Gastrocnemius medialis (tissue), 4 donors: ENCODE measurements at regions of chr22 and their contacts with region 1.

Region 1: DNA sequence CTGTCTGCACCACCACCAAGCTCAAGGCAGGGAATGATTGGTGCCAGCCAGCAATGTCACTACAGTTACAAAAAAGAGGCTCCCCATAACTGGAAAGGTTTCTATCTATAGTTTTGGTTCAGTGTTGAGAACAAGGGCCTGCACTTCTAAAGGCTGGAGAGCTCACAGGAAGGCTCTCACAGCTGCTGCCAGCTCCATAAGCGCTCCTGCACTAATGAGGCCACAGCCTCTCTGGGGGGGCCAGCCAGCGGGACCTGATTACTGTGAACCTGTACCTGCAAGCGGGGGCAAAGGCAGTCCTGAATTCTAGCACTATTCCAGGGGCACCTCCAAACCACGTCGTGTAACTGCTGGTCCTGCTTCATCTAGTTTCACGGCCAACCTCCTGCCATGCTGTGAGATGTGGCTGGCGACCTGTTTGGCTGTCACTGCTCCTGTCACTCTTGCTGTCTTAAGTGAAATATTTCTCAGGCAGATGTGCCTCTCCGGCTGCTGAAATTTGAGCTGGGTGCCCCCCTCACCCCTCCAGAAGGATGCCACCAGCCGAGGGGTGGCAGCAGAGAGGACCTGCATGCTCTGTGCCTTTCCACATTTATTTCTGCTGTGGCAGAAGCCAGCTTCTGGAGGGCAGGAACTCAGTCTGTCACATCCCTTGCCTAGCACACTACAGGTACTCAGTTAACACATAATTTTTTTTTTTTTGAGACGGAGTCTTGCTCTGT is 53.3 kb upstream of the ARFGAP3 start:
- DNase-seq: peak; percentile 81 to 90
- ATAC-seq: peak; percentile 59 to 70
- H3K4me3 ChIP-seq: no peak overlapping the region
- H3K27ac ChIP-seq: peak overlapping the region; percentile 63 to 87 (median 78)
- H3K4me1 ChIP-seq: peaks cover 79 to 83% of the 10 kb centered on the region in 2 donors
- H3K27me3 ChIP-seq: no peaks in the 10 kb centered on the region
- CTCF ChIP-seq: peak; percentile 53 to 64 (median 54)
- POLR2A ChIP-seq: no peak

Region 2: GRCh38 chr22:42814215-42814614 is 96.2 kb before region 1 on chr22:
- in situ Hi-C with region 1: no loop called
- intact Hi-C with region 1: no loop called
- DNase-seq: no peak
- ATAC-seq: no peak
- H3K4me3 ChIP-seq: no peak overlapping the region
- H3K27ac ChIP-seq: no peak overlapping the region
- H3K4me1 ChIP-seq: no peaks in the 10 kb centered on the region
- H3K27me3 ChIP-seq: no peaks in the 10 kb centered on the region
- CTCF ChIP-seq: no peak
- POLR2A ChIP-seq: no peak

Region 3: DNA sequence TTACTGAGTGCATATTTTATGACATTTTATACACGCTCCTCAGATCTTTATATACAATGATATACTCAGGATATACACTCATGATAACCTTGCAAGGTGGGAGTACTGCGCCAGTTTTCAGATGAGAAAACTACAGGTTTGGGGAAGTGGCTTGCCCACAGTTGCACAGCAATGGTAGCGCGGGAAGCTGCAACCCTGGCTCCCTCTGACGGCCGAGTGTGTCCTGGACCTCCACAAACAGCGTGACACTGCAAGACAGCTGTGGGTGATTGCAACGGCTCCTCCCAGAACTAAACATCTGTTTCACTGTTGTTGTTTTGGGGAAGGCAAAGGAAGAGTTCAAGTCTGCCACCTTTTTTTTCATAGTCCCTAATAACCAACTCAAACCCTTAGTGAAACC is 57.6 kb after region 1 on chr22:
- in situ Hi-C with region 1: loop called in 1 of 4 experiments (anchors 10 kb)
- intact Hi-C with region 1: loop called (anchors 5 kb)
- DNase-seq: peak; percentile 72 to 74
- ATAC-seq: peak; percentile 60 to 69
- H3K4me3 ChIP-seq: no peak overlapping the region
- H3K27ac ChIP-seq: peak overlapping the region; percentile 7 to 77 (median 50)
- H3K4me1 ChIP-seq: peaks cover 26 to 44% of the 10 kb centered on the region in 2 donors
- H3K27me3 ChIP-seq: no peaks in the 10 kb centered on the region
- CTCF ChIP-seq: peak in 4 of 5 experiments; percentile 28 to 52 (median 45)
- POLR2A ChIP-seq: no peak

Region 4: GRCh38 chr22:43014869-43015676 is 104.7 kb after region 1 on chr22 and contains the start of gene PACSIN2:
- in situ Hi-C with region 1: no loop called
- intact Hi-C with region 1: loop called (anchors 1 kb)
- DNase-seq: peak; percentile 99 to 100
- ATAC-seq: peak; percentile 89 to 91
- H3K4me3 ChIP-seq: peak within 1 kb of the TSS; percentile 86 to 97 (median 92)
- H3K27ac ChIP-seq: peak within 1 kb of the TSS; percentile 75 to 90 (median 82)
- H3K4me1 ChIP-seq: peaks cover 16 to 20% of the 10 kb centered on the region in 2 donors
- H3K27me3 ChIP-seq: no peaks in the 10 kb centered on the region
- CTCF ChIP-seq: no peak
- POLR2A ChIP-seq: peak; percentile 94 to 98
- total RNA-seq, gene PACSIN2: 37.3 to 45.9 (median 39.8) TPM